ENCODE measurements at regions of chr20 and their contacts with region 1.

Region 1: GRCh38 chr20:50308513-50309279 is 118.1 kb downstream of the CEBPB start:
- DNase-seq: peak; percentile 84 to 98
- H3K4me3 ChIP-seq: peak overlapping the region in 1 of 2 donors; percentile 31
- H3K27ac ChIP-seq: peak overlapping the region; percentile 85 to 89
- H3K4me1 ChIP-seq: peaks cover 19 to 37% of the 10 kb centered on the region in 2 donors
- H3K27me3 ChIP-seq: no peaks in the 10 kb centered on the region
- CTCF ChIP-seq: peak in 1 of 3 experiments; percentile 8

Region 2: GRCh38 chr20:49785852-49786175 is 522.9 kb before region 1 on chr20:
- intact Hi-C with region 1: no loop called
- DNase-seq: no peak
- H3K4me3 ChIP-seq: no peak overlapping the region
- H3K27ac ChIP-seq: no peak overlapping the region
- H3K4me1 ChIP-seq: no peaks in the 10 kb centered on the region
- H3K27me3 ChIP-seq: no peaks in the 10 kb centered on the region
- CTCF ChIP-seq: no peak

Region 3: DNA sequence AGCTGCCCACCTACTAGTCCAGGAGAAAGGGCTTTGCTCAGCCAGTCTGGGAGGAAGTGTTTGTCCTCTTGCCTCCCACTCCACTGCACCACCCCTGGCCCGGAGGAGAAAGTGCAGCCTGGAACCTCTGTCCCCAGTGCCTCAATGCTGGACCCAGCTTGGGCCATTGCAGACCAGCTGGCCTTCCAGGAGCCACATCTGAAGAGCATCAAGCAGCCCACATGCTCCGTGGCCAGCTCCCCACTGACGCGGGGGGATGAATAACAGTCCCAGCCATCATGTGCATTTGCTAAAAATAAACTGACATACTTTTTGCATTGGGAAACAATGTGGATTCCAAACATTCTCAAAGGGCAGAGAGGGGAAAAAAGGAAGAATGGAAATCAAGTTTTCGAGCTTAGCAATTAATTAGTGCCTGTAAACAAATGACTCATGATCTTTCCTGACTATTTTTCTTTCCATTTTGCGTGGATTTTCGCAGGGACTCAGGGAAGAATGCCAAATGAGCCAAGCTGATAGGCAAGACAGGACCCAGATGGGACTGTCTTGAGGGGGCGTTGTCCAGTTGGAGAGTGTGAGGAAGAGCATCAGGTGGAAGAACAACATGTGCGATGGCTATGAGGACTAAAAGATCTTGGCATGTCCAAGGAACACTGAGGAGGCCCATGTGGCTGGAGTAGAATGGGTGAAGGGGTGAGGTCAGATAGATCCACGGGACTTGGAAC is 84.0 kb before region 1 on chr20:
- intact Hi-C with region 1: loop called (anchors 1 kb)
- DNase-seq: peak; percentile 52 to 93
- H3K4me3 ChIP-seq: no peak overlapping the region
- H3K27ac ChIP-seq: peak overlapping the region; percentile 90 to 92
- H3K4me1 ChIP-seq: peaks cover 4 to 27% of the 10 kb centered on the region in 2 donors
- H3K27me3 ChIP-seq: no peaks in the 10 kb centered on the region
- CTCF ChIP-seq: peak in 2 of 3 experiments; percentile 27 to 37

Region 4: GRCh38 chr20:50379049-50379990 is 70.6 kb after region 1 on chr20:
- intact Hi-C with region 1: loop called (anchors 2 kb)
- DNase-seq: peak; percentile 78 to 97
- H3K4me3 ChIP-seq: peak overlapping the region in 1 of 2 donors; percentile 36
- H3K27ac ChIP-seq: peak overlapping the region; percentile 65 to 81
- H3K4me1 ChIP-seq: peaks cover 8 to 37% of the 10 kb centered on the region in 2 donors
- H3K27me3 ChIP-seq: no peaks in the 10 kb centered on the region
- CTCF ChIP-seq: no peak

Region 5: GRCh38 chr20:50395258-50395729 is 86.6 kb after region 1 on chr20:
- intact Hi-C with region 1: loop called (anchors 2 kb)
- DNase-seq: peak; percentile 93 to 98
- H3K4me3 ChIP-seq: no peak overlapping the region
- H3K27ac ChIP-seq: peak overlapping the region; percentile 90 to 97
- H3K4me1 ChIP-seq: peaks cover 30 to 56% of the 10 kb centered on the region in 2 donors
- H3K27me3 ChIP-seq: no peaks in the 10 kb centered on the region
- CTCF ChIP-seq: no peak

Region 6: GRCh38 chr20:50415516-50416113 is 106.9 kb after region 1 on chr20:
- intact Hi-C with region 1: loop called (anchors 2 kb)
- DNase-seq: peak; percentile 94 to 100
- H3K4me3 ChIP-seq: peak overlapping the region in 1 of 2 donors; percentile 5
- H3K27ac ChIP-seq: peak overlapping the region; percentile 98 to 99
- H3K4me1 ChIP-seq: peaks cover 16 to 24% of the 10 kb centered on the region in 2 donors
- H3K27me3 ChIP-seq: no peaks in the 10 kb centered on the region
- CTCF ChIP-seq: no peak